Calu3 (cell line): ENCODE measurements at regions of chr6 and their contacts with region 1.

Region 1: DNA sequence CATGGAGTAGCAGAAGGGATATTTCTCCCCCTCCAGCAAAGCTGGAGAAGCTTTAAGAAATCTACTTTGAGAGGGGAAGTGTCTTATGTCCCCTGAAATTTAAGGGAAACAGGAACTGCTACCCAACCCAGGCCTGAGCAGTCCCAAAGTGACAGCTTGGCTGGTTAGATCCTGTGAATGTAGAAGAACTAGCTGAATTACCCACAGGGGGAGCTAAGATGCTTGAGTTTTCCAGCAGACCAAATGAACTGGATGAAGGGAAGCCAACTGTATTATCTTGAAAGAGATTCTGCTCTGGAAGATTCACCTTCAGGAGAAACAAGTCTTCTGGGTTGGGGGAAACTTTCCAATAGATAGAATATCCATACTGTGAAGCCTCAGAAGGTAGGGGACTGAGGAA is 303.3 kb upstream of the MMS22L start:
- DNase-seq: no peak
- H3K4me3 Mint-ChIP-seq: no peak overlapping the region
- H3K27ac Mint-ChIP-seq: no peak overlapping the region
- H3K4me1 Mint-ChIP-seq: no peaks in the 10 kb centered on the region
- H3K27me3 Mint-ChIP-seq: no peaks in the 10 kb centered on the region
- CTCF ChIP-seq: no peak

Region 2: GRCh38 chr6:97632341-97632740 is 46.0 kb after region 1 on chr6:
- CTCF ChIA-PET with region 1: no interaction called
- intact Hi-C with region 1: loop called (anchors 1 kb)
- DNase-seq: no peak
- H3K4me3 Mint-ChIP-seq: no peak overlapping the region
- H3K27ac Mint-ChIP-seq: no peak overlapping the region
- H3K4me1 Mint-ChIP-seq: peaks cover under 1% of the 10 kb centered on the region
- H3K27me3 Mint-ChIP-seq: no peaks in the 10 kb centered on the region
- CTCF ChIP-seq: no peak